Mammary epithelial cell (primary cell): ENCODE measurements at regions of chr2 and their contacts with region 1.

Region 1: GRCh38 chr2:176554101-176555048 is 285.1 kb downstream of the MTX2 start:
- DNase-seq: peak; percentile 34
- H3K4me3 ChIP-seq: peak overlapping the region; percentile 49 to 54 (median 49)
- H3K27ac ChIP-seq: no peak overlapping the region
- H3K4me1 ChIP-seq: peaks cover 16% of the 10 kb centered on the region
- H3K27me3 ChIP-seq: peaks cover 8% of the 10 kb centered on the region
- CTCF ChIP-seq: peak; percentile 58 to 73

Region 2: GRCh38 chr2:176135034-176135440 is 419.3 kb before region 1 on chr2:
- CTCF ChIA-PET with region 1: interaction called, 15 read pairs
- dilution Hi-C with region 1: no loop called
- in situ Hi-C with region 1: loop called (anchors 5 to 10 kb)
- intact Hi-C with region 1: loop called (anchors 1 kb)
- DNase-seq: no peak
- H3K4me3 ChIP-seq: no peak overlapping the region
- H3K27ac ChIP-seq: no peak overlapping the region
- H3K4me1 ChIP-seq: peaks cover 10% of the 10 kb centered on the region
- H3K27me3 ChIP-seq: peaks cover 59% of the 10 kb centered on the region
- CTCF ChIP-seq: peak in 1 of 2 donors; percentile 4

Region 3: GRCh38 chr2:176370467-176371171 is 183.8 kb before region 1 on chr2:
- CTCF ChIA-PET with region 1: interaction called, 10 read pairs
- dilution Hi-C with region 1: no loop called
- in situ Hi-C with region 1: no loop called
- intact Hi-C with region 1: no loop called
- DNase-seq: no peak
- H3K4me3 ChIP-seq: no peak overlapping the region
- H3K27ac ChIP-seq: no peak overlapping the region
- H3K4me1 ChIP-seq: no peaks in the 10 kb centered on the region
- H3K27me3 ChIP-seq: peaks cover 2% of the 10 kb centered on the region
- CTCF ChIP-seq: no peak

Region 4: GRCh38 chr2:176931588-176932563 is 377.5 kb after region 1 on chr2:
- CTCF ChIA-PET with region 1: no interaction called
- dilution Hi-C with region 1: no loop called
- in situ Hi-C with region 1: no loop called
- intact Hi-C with region 1: no loop called
- DNase-seq: peak; percentile 39
- H3K4me3 ChIP-seq: no peak overlapping the region
- H3K27ac ChIP-seq: no peak overlapping the region
- H3K4me1 ChIP-seq: no peaks in the 10 kb centered on the region
- H3K27me3 ChIP-seq: peaks cover 4% of the 10 kb centered on the region
- CTCF ChIP-seq: peak in 1 of 2 donors; percentile 14